H1 (cell line): ENCODE measurements at regions of chr7 and their contacts with region 1.

Region 1: DNA sequence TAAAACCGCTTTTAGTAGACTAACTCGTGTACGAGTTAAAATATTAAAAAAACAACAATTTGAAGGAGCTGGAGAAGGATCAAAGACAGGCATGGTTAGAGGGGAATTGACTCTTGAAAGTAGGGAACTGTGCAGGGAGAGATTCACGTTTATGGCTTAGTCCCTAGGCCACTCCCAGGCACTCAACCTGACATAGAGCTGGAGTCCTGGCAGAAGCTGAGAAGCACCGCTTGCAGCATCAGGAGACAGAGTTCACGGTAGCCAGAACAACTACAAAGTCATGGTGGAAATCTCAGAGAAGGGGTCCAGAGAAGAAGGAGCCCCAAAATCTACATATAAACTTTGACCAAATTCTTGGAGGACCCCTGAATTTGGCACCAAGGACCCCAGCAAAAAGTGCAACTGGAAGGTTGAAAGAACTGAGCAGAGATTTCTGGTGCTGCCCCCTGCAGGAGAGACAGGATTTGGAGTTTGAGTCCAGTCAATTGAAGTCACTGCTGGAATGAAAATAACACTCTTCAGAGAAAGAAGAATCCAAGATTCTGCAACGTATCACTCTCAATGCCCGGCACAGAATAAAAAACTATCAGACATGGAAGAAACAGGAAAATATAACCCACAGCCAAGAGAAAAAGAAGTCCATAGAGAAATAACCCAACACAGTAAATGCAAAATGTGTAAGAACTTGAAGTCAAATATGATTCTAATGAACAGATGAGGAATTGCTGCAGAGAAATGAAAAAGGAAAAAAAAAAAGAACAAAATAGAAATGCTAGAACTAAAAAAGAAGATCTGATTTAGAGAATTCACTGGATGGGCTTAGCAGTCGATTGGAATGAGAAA is 493.3 kb upstream of the PODXL start:
- DNase-seq: peak in 1 of 2 experiments; percentile 86
- H3K4me3 ChIP-seq: no peak overlapping the region
- H3K27ac ChIP-seq: no peak overlapping the region
- H3K4me1 ChIP-seq: no peaks in the 10 kb centered on the region
- H3K27me3 ChIP-seq: no peaks in the 10 kb centered on the region; a peak in 1 of 7 replicates
- CTCF ChIP-seq: peak; percentile 32 to 73 (median 69)
- EP300 ChIP-seq: no peak
- POLR2A ChIP-seq: no peak
- RAD21 ChIP-seq: peak; percentile 42 to 63

Region 2: GRCh38 chr7:132030086-132030568 is 19.6 kb before region 1 on chr7:
- CTCF ChIA-PET with region 1: interaction called, 13 read pairs
- POLR2A ChIA-PET with region 1: no interaction called
- DNase-seq: no peak
- H3K4me3 ChIP-seq: no peak overlapping the region
- H3K27ac ChIP-seq: no peak overlapping the region
- H3K4me1 ChIP-seq: no peaks in the 10 kb centered on the region
- H3K27me3 ChIP-seq: no peaks in the 10 kb centered on the region
- CTCF ChIP-seq: no peak
- EP300 ChIP-seq: no peak
- POLR2A ChIP-seq: no peak
- RAD21 ChIP-seq: no peak

Region 3: GRCh38 chr7:132035600-132036362 is 13.9 kb before region 1 on chr7:
- CTCF ChIA-PET with region 1: interaction called, 12 read pairs
- POLR2A ChIA-PET with region 1: no interaction called
- DNase-seq: no peak
- H3K4me3 ChIP-seq: no peak overlapping the region
- H3K27ac ChIP-seq: no peak overlapping the region
- H3K4me1 ChIP-seq: peaks cover 0 to 6% (median 4%) of the 10 kb centered on the region in 4 experiments; a peak in 5 of 7 replicates
- H3K27me3 ChIP-seq: no peaks in the 10 kb centered on the region
- CTCF ChIP-seq: no peak
- EP300 ChIP-seq: no peak
- POLR2A ChIP-seq: no peak
- RAD21 ChIP-seq: no peak

Region 4: DNA sequence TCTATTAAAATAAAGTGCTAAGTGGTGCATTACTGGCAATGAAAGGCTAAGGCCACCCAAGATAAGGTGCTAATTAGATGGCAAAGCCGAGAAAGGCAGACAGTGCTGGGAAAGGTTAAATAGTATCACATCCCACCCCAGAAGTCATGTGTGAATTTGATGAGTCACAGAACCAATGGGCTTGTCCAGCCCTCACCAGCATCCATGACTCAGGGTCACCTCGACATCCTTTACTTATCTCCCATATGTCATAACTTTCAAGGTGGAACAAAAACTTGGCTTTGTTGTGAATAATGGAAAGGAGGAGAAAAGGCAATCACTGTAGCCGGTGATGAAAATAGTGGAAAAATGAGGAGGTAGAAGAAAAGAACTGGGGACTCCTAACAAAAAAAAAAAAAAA is 67.5 kb after region 1 on chr7:
- CTCF ChIA-PET with region 1: no interaction called
- POLR2A ChIA-PET with region 1: no interaction called
- DNase-seq: no peak
- H3K4me3 ChIP-seq: no peak overlapping the region
- H3K27ac ChIP-seq: no peak overlapping the region
- H3K4me1 ChIP-seq: peaks cover 0 to 5% (median under 1%) of the 10 kb centered on the region in 4 experiments; a peak in 4 of 7 replicates
- H3K27me3 ChIP-seq: no peaks in the 10 kb centered on the region
- CTCF ChIP-seq: no peak
- EP300 ChIP-seq: no peak
- POLR2A ChIP-seq: no peak
- RAD21 ChIP-seq: no peak